ENCODE measurements at regions of chr7 and their contacts with region 1.

Region 1: GRCh38 chr7:104272767-104273384 is 55.5 kb upstream of the LHFPL3 start:
- DNase-seq: peak in 1 of 3 donors; percentile 54
- ATAC-seq: peak; percentile 48
- H3K4me3 ChIP-seq: no peak overlapping the region
- H3K4me1 ChIP-seq: no peaks in the 10 kb centered on the region
- CTCF ChIP-seq: peak; percentile 10

Region 2: GRCh38 chr7:103915680-103916357 is 357.1 kb before region 1 on chr7:
- intact Hi-C with region 1: no loop called
- DNase-seq: no peak
- ATAC-seq: no peak
- H3K4me3 ChIP-seq: no peak overlapping the region
- H3K4me1 ChIP-seq: no peaks in the 10 kb centered on the region
- CTCF ChIP-seq: no peak

Region 3: GRCh38 chr7:104548868-104549267 is 276.0 kb after region 1 on chr7:
- intact Hi-C with region 1: loop called in 1 of 2 experiments (anchors 5 kb)
- DNase-seq: no peak
- ATAC-seq: peak; percentile 67
- H3K4me3 ChIP-seq: no peak overlapping the region
- H3K4me1 ChIP-seq: no peaks in the 10 kb centered on the region
- CTCF ChIP-seq: no peak